ENCODE measurements at regions of chr5 and their contacts with region 1.

Region 1: GRCh38 chr5:57173185-57174127 is at the start of gene GPBP1:
- DNase-seq: peak; percentile 99
- H3K4me3 Mint-ChIP-seq: peak within 1 kb of the TSS; percentile 97
- H3K27ac Mint-ChIP-seq: peak within 1 kb of the TSS; percentile 99
- H3K4me1 Mint-ChIP-seq: peaks cover 30% of the 10 kb centered on the region
- H3K27me3 Mint-ChIP-seq: peaks cover 2% of the 10 kb centered on the region
- total RNA-seq, gene GPBP1: 85.2 and 86.7 TPM in 2 replicates

Region 2: DNA sequence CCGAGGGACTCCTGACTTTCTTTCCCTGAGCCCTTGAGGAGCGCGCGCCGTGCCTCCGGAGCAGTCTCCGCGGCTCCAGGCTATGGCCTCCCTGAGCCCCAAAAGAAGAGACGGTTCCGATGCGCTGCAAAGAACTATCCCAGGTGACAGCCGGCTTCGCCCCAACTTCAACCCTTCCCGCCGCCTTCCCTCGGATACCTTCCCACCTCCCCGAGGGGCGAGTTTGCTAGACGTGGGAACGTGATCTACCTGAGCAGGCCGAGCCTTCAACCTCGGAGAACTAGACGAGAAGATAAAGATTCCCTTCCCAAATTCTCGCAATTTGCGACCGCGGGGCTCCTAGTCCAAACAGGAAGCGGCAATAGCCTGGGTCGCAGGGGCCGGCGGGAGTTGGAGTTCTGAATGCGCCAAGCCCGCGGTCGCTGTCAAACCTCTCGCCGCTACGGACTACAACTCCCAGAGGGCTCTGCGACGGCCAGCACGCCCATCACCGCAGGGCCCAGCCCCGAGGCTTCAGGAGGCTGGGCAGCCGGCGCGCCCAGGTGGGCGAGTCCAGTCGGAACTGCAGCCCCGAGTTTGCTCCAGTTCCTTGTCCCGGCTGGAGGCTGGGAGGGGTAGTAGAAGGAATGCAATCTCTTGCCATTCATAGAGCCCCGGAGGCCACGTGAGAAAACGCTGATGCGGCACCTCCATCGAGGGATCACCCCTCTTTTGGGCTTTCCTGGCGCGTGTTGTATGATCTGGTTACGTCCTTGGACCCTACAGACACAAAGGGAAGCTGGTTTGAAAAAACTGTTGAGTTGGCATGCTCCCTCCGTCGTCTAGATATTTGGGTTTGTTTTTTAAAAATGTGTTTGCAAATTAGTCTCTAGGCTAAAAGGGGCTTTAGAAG is 1461.2 kb before region 1 on chr5 and contains the start of gene SLC38A9:
- intact Hi-C with region 1: loop called (anchors 2 kb)
- DNase-seq: peak; percentile 98
- H3K4me3 Mint-ChIP-seq: peak within 1 kb of the TSS; percentile 97
- H3K27ac Mint-ChIP-seq: peak within 1 kb of the TSS; percentile 90
- H3K4me1 Mint-ChIP-seq: peaks cover 28% of the 10 kb centered on the region
- H3K27me3 Mint-ChIP-seq: no peaks in the 10 kb centered on the region
- total RNA-seq, gene SLC38A9: 20.5 and 21.4 TPM in 2 replicates

Region 3: DNA sequence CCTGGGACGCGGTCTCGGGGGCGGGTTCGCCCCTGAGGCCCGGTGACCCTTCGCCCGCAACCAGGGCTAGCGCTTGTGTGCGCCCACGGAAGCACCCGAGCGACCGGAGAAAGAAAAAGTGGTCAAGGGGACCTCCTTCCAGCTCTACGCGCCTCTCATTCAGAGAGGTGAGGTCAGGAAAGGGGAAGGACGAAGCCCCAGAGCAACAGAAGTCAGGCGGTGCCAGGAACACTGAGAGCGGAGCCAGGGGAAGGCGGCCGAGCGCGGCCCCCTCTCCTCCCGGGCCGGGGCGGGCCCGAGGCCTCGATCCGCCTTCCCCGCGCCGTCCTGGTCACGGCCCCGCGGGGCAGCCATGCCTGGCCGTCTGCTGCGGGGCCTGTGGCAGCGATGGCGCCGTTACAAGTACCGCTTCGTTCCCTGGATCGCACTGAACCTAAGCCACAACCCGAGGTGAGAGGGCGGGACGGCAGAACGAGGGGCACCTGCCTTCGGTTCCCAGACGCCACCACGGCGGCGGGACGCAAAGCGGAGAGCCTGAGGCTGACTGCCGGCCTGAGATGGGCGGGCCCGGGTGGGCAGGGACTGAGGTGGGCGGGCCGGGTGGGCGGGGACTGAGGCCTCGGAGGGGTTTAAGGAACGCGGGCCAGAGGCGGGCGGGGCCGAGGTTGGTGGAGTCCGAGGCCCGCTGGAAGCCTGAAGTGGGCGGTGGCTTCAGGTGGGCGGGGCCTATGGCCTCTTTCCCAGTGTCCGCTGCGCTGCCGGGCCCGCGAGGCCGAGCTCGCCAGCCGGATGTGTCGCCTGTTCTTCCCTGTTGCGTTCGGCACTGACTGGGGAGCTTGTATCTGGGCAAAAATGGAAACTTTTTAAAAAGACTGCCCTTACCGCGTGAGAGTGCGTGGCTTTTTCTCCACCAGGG is 263.9 kb before region 1 on chr5 and contains the start of gene SETD9:
- intact Hi-C with region 1: loop called (anchors 1 kb)
- DNase-seq: peak; percentile 98
- H3K4me3 Mint-ChIP-seq: peak within 1 kb of the TSS; percentile 92
- H3K27ac Mint-ChIP-seq: peak within 1 kb of the TSS; percentile 98
- H3K4me1 Mint-ChIP-seq: peaks cover 21% of the 10 kb centered on the region
- H3K27me3 Mint-ChIP-seq: peaks cover 18% of the 10 kb centered on the region
- total RNA-seq, gene SETD9: 15.9 and 17.0 TPM in 2 replicates

Region 4: DNA sequence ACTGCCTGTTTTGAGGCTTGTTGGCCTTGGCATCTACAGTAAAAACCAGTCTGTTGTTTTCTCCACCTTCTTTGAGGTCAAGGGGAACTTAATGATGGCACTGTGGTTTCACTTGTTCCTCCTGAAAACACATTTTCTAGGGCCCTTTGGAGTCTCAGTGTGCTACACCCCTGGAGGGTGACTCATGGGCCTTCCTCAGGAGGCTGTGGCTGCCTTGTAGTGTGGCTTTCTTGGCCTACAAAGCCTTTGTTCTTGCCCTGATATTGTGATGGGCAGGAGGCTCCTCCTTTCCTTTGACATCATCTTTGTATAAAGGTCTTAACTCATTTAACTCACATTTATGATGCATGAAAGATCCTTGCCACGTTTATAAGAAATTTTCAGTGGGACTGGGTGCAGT is 55.9 kb before region 1 on chr5:
- intact Hi-C with region 1: loop called (anchors 1 kb)
- DNase-seq: peak; percentile 91
- H3K4me3 Mint-ChIP-seq: peak overlapping the region; percentile 0
- H3K27ac Mint-ChIP-seq: peak overlapping the region; percentile 60
- H3K4me1 Mint-ChIP-seq: peaks cover 21% of the 10 kb centered on the region
- H3K27me3 Mint-ChIP-seq: no peaks in the 10 kb centered on the region

Region 5: DNA sequence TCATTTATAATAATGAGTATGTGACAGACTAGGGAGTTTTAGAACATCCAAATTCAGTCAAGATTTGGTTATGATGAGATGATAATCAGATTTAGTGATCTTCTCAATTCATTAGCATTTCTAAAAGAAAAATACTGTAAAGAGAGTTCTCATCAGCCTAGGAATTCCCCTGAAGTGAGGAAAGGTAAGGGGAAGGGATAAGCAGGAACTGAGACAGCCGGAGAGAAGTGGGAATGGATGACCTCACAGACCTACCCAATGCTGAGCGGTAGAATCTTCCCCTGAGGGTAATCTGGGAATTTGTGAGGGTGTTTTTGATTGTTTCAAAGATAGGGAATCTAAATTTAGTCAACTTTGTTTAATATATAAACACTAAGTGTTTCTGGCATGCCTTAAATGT is 16.3 kb before region 1 on chr5:
- intact Hi-C with region 1: no loop called
- DNase-seq: no peak
- H3K4me3 Mint-ChIP-seq: no peak overlapping the region
- H3K27ac Mint-ChIP-seq: no peak overlapping the region
- H3K4me1 Mint-ChIP-seq: no peaks in the 10 kb centered on the region
- H3K27me3 Mint-ChIP-seq: peaks cover 1% of the 10 kb centered on the region

Region 6: DNA sequence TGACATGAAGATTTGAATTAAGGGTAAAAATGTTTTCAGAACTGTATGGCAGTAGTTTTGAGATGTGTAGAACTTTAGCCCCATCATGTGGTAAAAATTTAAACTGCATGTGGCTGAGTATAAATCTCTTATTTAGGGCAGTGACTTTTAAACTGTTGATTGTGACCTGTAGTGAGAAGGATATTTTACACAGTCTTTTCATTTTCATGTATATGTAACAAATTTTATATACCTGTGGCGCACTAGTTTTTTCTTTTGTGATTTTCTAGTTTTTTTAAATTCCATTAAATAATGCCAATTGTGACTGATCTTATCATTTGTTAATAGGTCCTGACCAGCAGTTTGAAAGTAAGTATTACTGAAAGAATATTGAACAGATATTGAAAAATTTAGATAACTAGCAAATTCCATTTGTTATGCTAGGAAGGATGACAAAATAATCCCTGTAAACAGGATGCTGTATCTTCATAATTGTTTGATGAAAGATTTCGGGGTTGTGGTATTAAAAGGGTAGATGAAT is 47.7 kb after region 1 on chr5:
- intact Hi-C with region 1: loop called (anchors 1 kb)
- DNase-seq: peak; percentile 86
- H3K4me3 Mint-ChIP-seq: no peak overlapping the region
- H3K27ac Mint-ChIP-seq: peak overlapping the region; percentile 2
- H3K4me1 Mint-ChIP-seq: peaks cover 21% of the 10 kb centered on the region
- H3K27me3 Mint-ChIP-seq: no peaks in the 10 kb centered on the region

Region 7: GRCh38 chr5:57552033-57552432 is 378.6 kb after region 1 on chr5:
- intact Hi-C with region 1: no loop called
- DNase-seq: peak; percentile 7
- H3K4me3 Mint-ChIP-seq: no peak overlapping the region
- H3K27ac Mint-ChIP-seq: no peak overlapping the region
- H3K4me1 Mint-ChIP-seq: no peaks in the 10 kb centered on the region
- H3K27me3 Mint-ChIP-seq: peaks cover 2% of the 10 kb centered on the region

Measured in activated CD4-positive, alpha-beta T cell treated with anti-CD3 and anti-CD28 coated beads, Interleukin-2, amount 10 ng/mL, durations not matched to agents 24 days and 14 days (primary cell).